Heart left ventricle (tissue), 16 donors: ENCODE measurements at regions of chr9 and their contacts with region 1.

Region 1: GRCh38 chr9:700365-701282 is 140.9 kb upstream of the DMRT1 start:
- DNase-seq: no peak
- ATAC-seq: no peak
- H3K4me3 ChIP-seq: no peak overlapping the region
- H3K27ac ChIP-seq: peak overlapping the region in 5 of 12 donors; percentile 34 to 92 (median 37)
- H3K4me1 ChIP-seq: peaks cover 2 to 80% (median 31%) of the 10 kb centered on the region in 12 donors
- H3K27me3 ChIP-seq: no peaks in the 10 kb centered on the region
- CTCF ChIP-seq: no peak
- POLR2A ChIP-seq: no peak

Region 2: DNA sequence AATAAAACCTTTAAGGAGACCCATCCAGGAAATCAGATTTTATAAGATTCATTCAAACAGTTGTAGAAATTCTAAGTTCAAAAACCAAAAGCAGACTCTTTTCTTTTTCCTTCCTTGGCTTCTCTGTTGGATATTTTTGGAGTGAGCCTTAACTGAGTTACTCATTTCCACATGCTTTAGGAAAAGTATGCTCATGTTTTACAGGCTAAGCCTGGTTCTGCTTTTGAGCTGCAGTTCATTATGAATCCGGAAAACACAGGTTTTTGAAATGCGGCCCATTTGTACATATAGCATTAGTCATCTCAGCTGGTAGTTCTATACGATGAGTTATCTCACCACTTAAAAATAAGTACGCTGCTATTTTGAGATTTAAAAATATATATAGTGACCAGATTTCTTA is 15.7 kb before region 1 on chr9:
- intact Hi-C with region 1: loop called in 1 of 10 experiments (anchors 1 kb)
- DNase-seq: no peak
- ATAC-seq: peak in 1 of 4 donors; percentile 28
- H3K4me3 ChIP-seq: peak overlapping the region in 1 of 12 donors; percentile 20
- H3K27ac ChIP-seq: peak overlapping the region in 11 of 12 donors; percentile 7 to 92 (median 41)
- H3K4me1 ChIP-seq: peaks cover 0 to 61% (median 40%) of the 10 kb centered on the region in 12 donors
- H3K27me3 ChIP-seq: no peaks in the 10 kb centered on the region
- CTCF ChIP-seq: no peak
- POLR2A ChIP-seq: no peak